Panc1 (cell line): ENCODE measurements at regions of chr5 and their contacts with region 1.

Region 1: GRCh38 chr5:160188142-160189015 is 40.9 kb upstream of the FABP6 start:
- DNase-seq: no peak
- ATAC-seq: peak; percentile 85
- H3K4me3 ChIP-seq: peak overlapping the region; percentile 38 to 55
- H3K27ac ChIP-seq: peak overlapping the region; percentile 85
- H3K4me1 ChIP-seq: peaks cover 5% of the 10 kb centered on the region
- H3K27me3 ChIP-seq: no peaks in the 10 kb centered on the region
- CTCF ChIP-seq: no peak

Region 2: GRCh38 chr5:159286420-159287035 is 901.9 kb before region 1 on chr5:
- CTCF ChIA-PET with region 1: interaction called, 10 read pairs
- POLR2A ChIA-PET with region 1: no interaction called
- in situ Hi-C with region 1: no loop called
- intact Hi-C with region 1: no loop called
- DNase-seq: no peak
- ATAC-seq: peak; percentile 45; the same call in 1 of the 2 replicates
- H3K4me3 ChIP-seq: no peak overlapping the region
- H3K27ac ChIP-seq: no peak overlapping the region
- H3K4me1 ChIP-seq: no peaks in the 10 kb centered on the region
- H3K27me3 ChIP-seq: no peaks in the 10 kb centered on the region
- CTCF ChIP-seq: peak; percentile 41; the same call in 1 of the 2 replicates

Region 3: DNA sequence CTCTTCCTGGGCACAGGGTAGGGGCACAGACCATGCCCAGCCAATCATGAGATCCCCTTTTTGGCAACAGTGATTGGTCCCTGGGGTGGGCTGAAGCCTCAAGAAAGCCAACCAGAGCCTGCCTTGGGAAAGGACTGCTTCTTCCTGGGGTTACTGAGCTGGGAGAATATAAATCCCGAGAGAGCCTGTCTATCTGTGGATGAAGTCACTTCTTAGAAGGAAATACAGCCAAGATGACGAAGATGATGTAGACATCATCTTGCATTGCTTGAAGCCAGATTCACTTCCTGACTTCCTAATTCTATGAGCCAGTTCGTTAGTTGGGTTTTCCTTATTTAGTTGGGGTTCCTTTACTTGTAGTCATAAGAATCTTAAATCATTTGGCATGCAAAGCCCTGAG is 19.1 kb before region 1 on chr5:
- CTCF ChIA-PET with region 1: interaction called, 11 read pairs
- POLR2A ChIA-PET with region 1: no interaction called
- in situ Hi-C with region 1: no loop called
- intact Hi-C with region 1: no loop called
- DNase-seq: no peak
- ATAC-seq: no peak
- H3K4me3 ChIP-seq: no peak overlapping the region
- H3K27ac ChIP-seq: no peak overlapping the region
- H3K4me1 ChIP-seq: peaks cover 24% of the 10 kb centered on the region
- H3K27me3 ChIP-seq: no peaks in the 10 kb centered on the region
- CTCF ChIP-seq: no peak

Region 4: GRCh38 chr5:160357861-160358411 is 169.6 kb after region 1 on chr5:
- CTCF ChIA-PET with region 1: no interaction called
- POLR2A ChIA-PET with region 1: no interaction called
- in situ Hi-C with region 1: loop called (anchors 10 kb)
- intact Hi-C with region 1: no loop called
- DNase-seq: no peak
- ATAC-seq: peak; percentile 44; the same call in 1 of the 2 replicates
- H3K4me3 ChIP-seq: no peak overlapping the region
- H3K27ac ChIP-seq: no peak overlapping the region
- H3K4me1 ChIP-seq: no peaks in the 10 kb centered on the region
- H3K27me3 ChIP-seq: no peaks in the 10 kb centered on the region
- CTCF ChIP-seq: no peak